ENCODE measurements at regions of chr16 and their contacts with region 1.

Region 1: DNA sequence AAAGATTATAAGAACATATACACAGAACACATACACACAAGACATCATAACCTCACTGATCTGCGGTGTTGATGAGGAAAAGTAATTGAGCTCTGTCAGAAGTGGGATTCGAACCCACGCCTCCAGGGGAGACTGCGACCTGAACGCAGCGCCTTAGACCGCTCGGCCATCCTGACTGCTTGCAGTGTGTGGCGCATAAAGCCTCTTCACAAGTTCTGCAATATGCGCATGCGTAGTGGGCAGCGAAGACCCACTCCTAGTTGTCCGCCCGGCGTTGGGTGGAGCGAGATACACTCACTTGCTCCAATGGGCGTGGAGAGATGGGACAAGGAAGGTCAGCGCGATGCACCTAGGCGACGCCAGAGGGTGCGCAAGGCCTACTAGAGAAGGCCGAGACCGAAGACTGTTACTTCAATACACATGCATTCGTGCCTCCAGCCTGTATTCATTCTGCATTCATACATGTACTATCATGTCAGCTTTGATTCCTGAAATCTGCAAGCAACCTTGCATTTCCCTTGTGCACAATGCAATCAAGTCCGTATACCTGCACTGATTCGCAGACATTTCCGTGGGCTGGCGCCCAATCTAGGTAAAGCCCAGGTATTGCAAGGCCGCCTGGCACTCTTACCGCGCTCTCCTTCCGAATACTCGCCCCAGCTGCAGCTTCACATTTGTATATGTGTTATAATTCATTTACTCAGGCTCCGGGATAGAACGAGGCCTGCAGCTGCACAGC is 16.1 kb upstream of the PLLP start:
- DNase-seq: peak; percentile 99
- ATAC-seq: peak; percentile 90
- H3K4me3 Mint-ChIP-seq: no peak overlapping the region
- H3K27ac Mint-ChIP-seq: no peak overlapping the region
- H3K4me1 Mint-ChIP-seq: peaks cover 24% of the 10 kb centered on the region
- H3K27me3 Mint-ChIP-seq: no peaks in the 10 kb centered on the region

Region 2: GRCh38 chr16:57204675-57205074 is 95.9 kb before region 1 on chr16:
- CTCF ChIA-PET with region 1: no interaction called
- DNase-seq: no peak
- ATAC-seq: no peak
- H3K4me3 Mint-ChIP-seq: no peak overlapping the region
- H3K27ac Mint-ChIP-seq: no peak overlapping the region
- H3K4me1 Mint-ChIP-seq: no peaks in the 10 kb centered on the region
- H3K27me3 Mint-ChIP-seq: no peaks in the 10 kb centered on the region

Region 3: GRCh38 chr16:57277586-57277985 is 23.0 kb before region 1 on chr16:
- CTCF ChIA-PET with region 1: interaction called, 16 read pairs
- DNase-seq: peak; percentile 84
- ATAC-seq: peak; percentile 90
- H3K4me3 Mint-ChIP-seq: no peak overlapping the region
- H3K27ac Mint-ChIP-seq: peak overlapping the region; percentile 46
- H3K4me1 Mint-ChIP-seq: peaks cover 30% of the 10 kb centered on the region
- H3K27me3 Mint-ChIP-seq: peaks cover 16% of the 10 kb centered on the region

Region 4: DNA sequence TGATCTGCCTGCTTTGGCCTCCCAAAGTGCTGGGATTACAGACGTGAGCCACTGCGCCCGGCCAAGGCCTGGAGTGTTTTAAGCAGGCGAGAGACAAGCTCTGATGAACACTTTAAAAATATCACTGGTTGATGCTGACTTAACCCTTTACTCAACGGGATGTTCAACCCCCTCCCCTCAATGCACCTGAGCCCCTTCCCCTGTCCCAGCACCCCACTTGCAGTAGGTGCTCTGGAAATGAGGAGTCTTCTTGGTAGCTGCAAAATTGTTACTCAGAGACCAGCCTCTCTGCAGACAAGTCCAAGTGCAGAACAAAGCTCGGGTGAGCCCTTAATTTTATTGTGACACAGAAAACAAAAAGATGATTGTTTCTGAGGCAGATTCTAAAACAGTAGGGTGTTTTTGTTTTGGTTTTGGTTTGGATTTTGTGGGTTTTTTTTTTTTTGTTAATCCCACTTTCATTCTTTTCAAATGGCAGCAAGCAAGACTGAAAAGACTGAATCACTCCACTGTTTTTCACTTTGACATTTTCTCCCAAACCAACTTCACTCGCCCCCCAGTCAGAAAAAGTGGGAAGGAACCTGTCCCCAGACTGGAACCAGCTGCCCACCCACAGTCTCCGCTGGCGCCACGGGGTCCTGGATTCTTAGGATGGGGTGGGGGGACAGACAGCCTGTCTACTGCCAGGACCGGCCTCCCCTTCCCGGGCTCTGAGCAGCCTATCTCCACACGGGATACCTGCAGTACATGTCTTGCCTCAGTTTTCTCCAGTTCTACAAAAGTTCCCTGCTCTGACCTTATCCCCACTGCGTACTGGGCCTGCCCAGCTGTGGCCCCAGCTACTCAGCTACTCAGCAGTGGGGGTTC is 10.9 kb before region 1 on chr16:
- CTCF ChIA-PET with region 1: interaction called, 10 read pairs
- DNase-seq: no peak
- ATAC-seq: no peak
- H3K4me3 Mint-ChIP-seq: no peak overlapping the region
- H3K27ac Mint-ChIP-seq: peak overlapping the region; percentile 30
- H3K4me1 Mint-ChIP-seq: peaks cover 15% of the 10 kb centered on the region
- H3K27me3 Mint-ChIP-seq: peaks cover 12% of the 10 kb centered on the region

Region 5: GRCh38 chr16:57422026-57422944 is 121.7 kb after region 1 on chr16:
- CTCF ChIA-PET with region 1: interaction called, 283 read pairs
- DNase-seq: no peak
- ATAC-seq: no peak
- H3K4me3 Mint-ChIP-seq: no peak overlapping the region
- H3K27ac Mint-ChIP-seq: no peak overlapping the region
- H3K4me1 Mint-ChIP-seq: peaks cover 14% of the 10 kb centered on the region
- H3K27me3 Mint-ChIP-seq: no peaks in the 10 kb centered on the region

Region 6: DNA sequence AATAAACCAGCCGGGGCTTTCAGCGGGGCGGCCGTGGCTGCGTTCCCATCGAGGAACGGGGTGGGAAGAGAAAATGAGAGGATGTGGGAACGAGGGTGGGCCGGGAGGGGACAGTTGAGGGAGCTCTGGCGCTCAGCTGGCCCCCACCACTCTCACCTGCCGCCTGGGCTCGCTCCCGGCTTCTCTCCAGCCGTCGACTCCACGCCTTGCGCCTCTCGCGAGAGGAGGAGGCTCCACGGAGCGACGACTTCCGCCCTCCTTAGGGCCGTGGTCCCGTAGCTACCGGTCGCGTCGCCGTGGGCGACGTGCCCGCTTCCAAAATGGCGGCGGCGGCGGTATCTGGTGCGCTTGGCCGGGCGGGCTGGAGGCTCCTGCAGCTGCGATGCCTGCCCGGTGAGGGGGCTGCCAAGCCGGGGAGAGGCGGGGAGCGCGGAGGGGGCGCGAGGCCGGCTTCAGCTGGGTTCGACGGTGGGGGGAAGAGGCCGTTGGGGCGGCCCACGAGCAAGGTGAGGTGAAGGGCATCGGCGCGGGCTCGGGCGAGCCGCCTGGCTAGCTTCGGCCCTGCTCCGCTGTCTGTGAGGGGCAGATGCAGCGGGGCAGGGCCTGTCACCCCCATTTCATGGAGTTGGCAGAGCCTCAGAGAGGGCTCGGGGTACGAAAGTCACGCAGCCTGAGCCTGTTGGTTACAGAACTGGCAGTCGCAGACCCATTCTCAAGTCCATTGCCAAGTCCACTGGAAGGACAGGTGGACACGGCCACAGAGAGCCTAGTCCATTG is 146.8 kb after region 1 on chr16 and contains the starts of genes CIAPIN1 and COQ9:
- CTCF ChIA-PET with region 1: interaction called, 14 read pairs
- DNase-seq: peak; percentile 97
- ATAC-seq: peak; percentile 100
- H3K4me3 Mint-ChIP-seq: peak within 1 kb of the TSS; percentile 94
- H3K27ac Mint-ChIP-seq: peak within 1 kb of the TSS; percentile 86
- H3K4me1 Mint-ChIP-seq: peaks cover 37% of the 10 kb centered on the region
- H3K27me3 Mint-ChIP-seq: no peaks in the 10 kb centered on the region
- total RNA-seq, gene CIAPIN1: 46.5 to 62.5 TPM
- total RNA-seq, gene COQ9: 36.8 to 43.1 TPM

Measured in activated CD8-positive, alpha-beta memory T cell treated with anti-CD3 and anti-CD28 coated beads, Interleukin-2, amount 10 ng/mL, durations not matched to agents 7 days and 5 days (primary cell).